ENCODE measurements at regions of chr10 and their contacts with region 1.

Region 1: DNA sequence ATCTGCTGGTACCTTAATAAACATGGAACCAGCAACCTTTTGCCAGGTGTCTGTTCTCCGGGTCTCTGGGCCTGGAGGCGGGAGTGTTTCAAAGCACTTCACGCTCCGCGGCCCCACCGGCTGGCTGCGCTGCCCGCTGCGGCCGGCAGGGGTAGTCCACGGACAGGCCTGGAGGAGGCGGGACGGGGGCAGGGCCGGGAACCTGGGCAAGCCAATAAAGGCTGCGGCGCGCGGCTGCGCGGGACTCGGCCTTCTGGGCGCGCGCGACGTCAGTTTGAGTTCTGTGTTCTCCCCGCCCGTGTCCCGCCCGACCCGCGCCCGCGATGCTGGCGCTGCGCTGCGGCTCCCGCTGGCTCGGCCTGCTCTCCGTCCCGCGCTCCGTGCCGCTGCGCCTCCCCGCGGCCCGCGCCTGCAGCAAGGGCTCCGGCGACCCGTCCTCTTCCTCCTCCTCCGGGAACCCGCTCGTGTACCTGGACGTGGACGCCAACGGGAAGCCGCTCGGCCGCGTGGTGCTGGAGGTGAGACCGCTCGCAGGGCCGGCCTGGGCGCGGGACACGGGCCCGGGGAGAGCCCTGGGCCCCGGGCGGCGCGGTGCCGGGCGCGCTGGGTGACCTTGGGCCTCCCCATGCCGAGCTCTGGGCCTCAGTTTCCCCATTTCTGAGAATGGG is at the start of gene PPIF:
- DNase-seq: peak; percentile 81 to 96 (median 90)
- ATAC-seq: peak; percentile 93
- H3K4me3 ChIP-seq: peak within 1 kb of the TSS; percentile 74
- H3K4me3 Mint-ChIP-seq: peak within 1 kb of the TSS; percentile 85
- H3K27ac ChIP-seq: peak within 1 kb of the TSS; percentile 69 to 73
- H3K27ac Mint-ChIP-seq: peak within 1 kb of the TSS; percentile 81
- H3K4me1 ChIP-seq: peaks cover 58% of the 10 kb centered on the region
- H3K4me1 Mint-ChIP-seq: peaks cover 27% of the 10 kb centered on the region
- H3K27me3 ChIP-seq: no peaks in the 10 kb centered on the region
- H3K27me3 Mint-ChIP-seq: no peaks in the 10 kb centered on the region
- CTCF ChIP-seq: peak; percentile 92
- total RNA-seq, gene PPIF: 42.4 to 42.7 TPM

Region 2: DNA sequence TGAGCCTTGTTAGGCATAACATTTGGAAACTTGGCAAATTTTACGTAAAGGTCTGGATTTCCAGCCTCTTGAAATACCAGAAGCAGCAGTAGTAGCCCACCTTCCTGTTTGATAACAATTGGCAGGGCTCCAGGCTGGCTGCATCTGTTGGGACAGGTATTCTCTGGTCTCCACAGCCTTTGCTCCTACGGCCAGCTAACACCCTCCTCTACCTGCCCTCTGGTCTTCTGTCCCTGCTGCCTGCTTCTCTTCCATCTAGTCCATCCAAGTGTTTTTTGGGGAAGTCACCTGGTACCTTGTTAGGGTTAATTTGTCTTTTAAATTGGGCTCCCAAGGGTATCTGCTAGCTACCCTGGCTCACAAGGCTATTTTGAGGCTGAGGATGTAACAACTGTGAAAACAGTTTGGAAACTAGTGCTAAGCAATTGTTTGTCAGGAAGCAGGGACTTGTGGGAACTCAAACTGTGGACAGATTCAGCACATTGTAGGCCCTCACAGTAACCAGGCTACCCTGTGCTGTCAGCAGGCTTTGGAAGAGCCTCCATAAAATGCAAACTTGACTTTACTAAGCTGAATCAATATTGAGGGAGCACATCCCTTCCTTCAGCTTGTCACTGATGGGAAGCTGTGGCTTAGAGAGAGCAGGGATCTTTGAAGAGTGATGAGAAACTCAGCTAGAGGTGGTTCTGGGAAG is 1305.2 kb before region 1 on chr10:
- CTCF ChIA-PET with region 1: no interaction called
- POLR2A ChIA-PET with region 1: no interaction called
- intact Hi-C with region 1: loop called in 1 of 2 experiments (anchors 5 kb)
- DNase-seq: no peak
- ATAC-seq: no peak
- H3K4me3 ChIP-seq: no peak overlapping the region
- H3K4me3 Mint-ChIP-seq: no peak overlapping the region
- H3K27ac ChIP-seq: no peak overlapping the region
- H3K27ac Mint-ChIP-seq: peak overlapping the region; percentile 76
- H3K4me1 ChIP-seq: peaks cover 34% of the 10 kb centered on the region
- H3K4me1 Mint-ChIP-seq: peaks cover 52% of the 10 kb centered on the region
- H3K27me3 ChIP-seq: no peaks in the 10 kb centered on the region
- H3K27me3 Mint-ChIP-seq: no peaks in the 10 kb centered on the region
- CTCF ChIP-seq: no peak

Region 3: DNA sequence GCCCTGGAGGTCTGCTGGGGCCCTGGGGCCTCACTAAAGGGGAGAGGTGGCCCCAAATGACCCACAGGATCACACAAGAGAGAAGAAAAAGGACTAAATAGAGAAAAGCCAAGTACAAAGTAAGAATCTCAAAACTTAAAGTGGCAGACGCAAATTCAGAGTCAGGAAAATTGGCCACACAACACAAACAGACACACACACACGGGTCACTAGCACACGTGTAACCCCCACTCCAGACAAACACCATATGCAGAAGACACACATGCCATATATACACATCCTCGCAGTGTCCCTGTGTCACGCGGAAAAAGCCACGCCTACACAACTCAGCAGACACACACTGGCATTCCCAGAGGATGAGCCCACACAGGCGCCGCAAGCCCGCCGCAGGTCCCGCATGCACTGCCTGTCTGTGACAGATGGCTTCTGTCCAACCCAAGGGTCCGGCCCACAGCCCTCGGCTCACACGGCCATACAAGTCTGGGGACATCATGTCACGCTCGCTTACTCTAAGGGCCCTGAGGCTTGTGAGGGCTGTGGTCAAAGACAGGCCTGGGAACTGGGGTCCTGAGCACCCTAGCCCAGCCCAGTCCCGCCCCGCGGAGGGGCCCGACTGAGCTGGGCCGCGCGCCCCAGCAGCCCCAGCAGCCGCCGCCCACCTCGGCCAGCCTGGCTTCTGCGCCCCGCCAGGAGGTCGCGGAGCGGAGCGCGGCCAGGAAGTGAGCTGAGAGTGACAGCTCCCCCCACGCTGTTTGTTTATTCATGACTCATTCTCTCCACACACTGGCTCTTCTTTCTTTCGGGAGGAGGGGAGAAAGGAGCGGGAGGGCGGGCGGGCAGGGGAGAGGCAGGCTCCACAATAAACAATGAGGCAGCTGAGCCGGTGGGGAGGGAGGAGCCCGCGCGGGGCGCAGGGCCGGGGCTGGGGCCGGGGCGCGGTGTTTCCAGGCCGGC is 374.1 kb before region 1 on chr10:
- CTCF ChIA-PET with region 1: no interaction called
- POLR2A ChIA-PET with region 1: no interaction called
- intact Hi-C with region 1: loop called in 1 of 2 experiments (anchors 10 kb)
- DNase-seq: peak; percentile 14 to 86 (median 52)
- ATAC-seq: peak; percentile 69
- H3K4me3 ChIP-seq: peak overlapping the region; percentile 56
- H3K4me3 Mint-ChIP-seq: peak overlapping the region; percentile 91
- H3K27ac ChIP-seq: no peak overlapping the region
- H3K27ac Mint-ChIP-seq: peak overlapping the region; percentile 69
- H3K4me1 ChIP-seq: peaks cover 19% of the 10 kb centered on the region
- H3K4me1 Mint-ChIP-seq: peaks cover 15% of the 10 kb centered on the region
- H3K27me3 ChIP-seq: no peaks in the 10 kb centered on the region
- H3K27me3 Mint-ChIP-seq: no peaks in the 10 kb centered on the region
- CTCF ChIP-seq: no peak

Region 4: GRCh38 chr10:79292891-79293746 is 54.2 kb before region 1 on chr10:
- CTCF ChIA-PET with region 1: interaction called, 5 read pairs
- POLR2A ChIA-PET with region 1: no interaction called
- intact Hi-C with region 1: loop called in 1 of 2 experiments (anchors 5 kb)
- DNase-seq: peak in 8 of 14 experiments; percentile 15 to 62 (median 38)
- ATAC-seq: peak; percentile 61
- H3K4me3 ChIP-seq: no peak overlapping the region
- H3K4me3 Mint-ChIP-seq: no peak overlapping the region
- H3K27ac ChIP-seq: no peak overlapping the region
- H3K27ac Mint-ChIP-seq: no peak overlapping the region
- H3K4me1 ChIP-seq: peaks cover 13% of the 10 kb centered on the region
- H3K4me1 Mint-ChIP-seq: peaks cover 8% of the 10 kb centered on the region
- H3K27me3 ChIP-seq: no peaks in the 10 kb centered on the region
- H3K27me3 Mint-ChIP-seq: no peaks in the 10 kb centered on the region
- CTCF ChIP-seq: peak; percentile 57

Region 5: DNA sequence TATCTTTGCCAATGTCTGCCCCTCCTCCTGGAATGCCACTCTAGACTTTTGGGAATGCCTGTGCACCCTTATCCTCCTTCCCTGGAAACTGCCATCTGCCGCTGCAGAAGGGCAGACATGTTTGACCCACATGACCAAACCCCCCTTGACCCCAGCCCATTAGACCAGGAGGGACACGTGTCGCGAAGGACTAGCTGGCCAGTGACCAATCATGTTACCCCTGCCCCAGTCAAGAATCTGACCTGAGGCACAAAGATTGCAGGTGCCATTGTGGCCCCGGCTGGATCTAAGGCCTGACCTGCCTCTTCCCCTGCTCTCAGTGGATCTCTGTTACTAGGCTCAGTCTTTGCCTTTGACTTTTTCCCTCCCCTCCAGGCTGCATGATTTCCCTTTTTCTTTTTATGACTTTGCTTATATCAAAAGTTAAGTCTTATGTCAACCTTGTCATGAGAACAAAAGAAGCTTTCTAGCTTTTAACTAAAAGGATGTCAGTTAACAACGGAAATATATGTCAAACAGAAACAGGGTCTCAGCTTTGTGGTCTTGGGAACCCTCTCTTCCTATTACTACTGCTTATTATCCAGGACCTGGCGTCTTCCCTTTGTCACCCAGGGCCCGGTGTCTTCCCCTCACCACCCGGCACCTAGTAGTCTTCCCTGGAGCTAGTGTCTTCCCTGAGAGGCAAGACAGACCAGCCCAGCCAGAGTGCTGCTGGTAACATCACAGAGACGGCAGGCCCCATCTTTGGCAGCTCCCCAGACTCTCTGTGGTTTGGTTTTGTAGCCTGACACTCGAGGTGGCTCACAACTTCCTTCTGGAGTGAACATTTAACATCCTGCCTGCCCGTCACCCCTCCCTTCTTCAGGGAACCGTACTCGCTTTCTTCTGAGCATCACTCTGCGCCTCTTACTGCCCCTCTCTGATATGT is 24.5 kb before region 1 on chr10:
- CTCF ChIA-PET with region 1: interaction called, 5 read pairs
- POLR2A ChIA-PET with region 1: interaction called, 46 read pairs
- intact Hi-C with region 1: loop called in 1 of 2 experiments (anchors 2 kb)
- DNase-seq: peak; percentile 64 to 92 (median 81)
- ATAC-seq: peak; percentile 93
- H3K4me3 ChIP-seq: peak overlapping the region; percentile 17
- H3K4me3 Mint-ChIP-seq: peak overlapping the region; percentile 82
- H3K27ac ChIP-seq: peak overlapping the region; percentile 42 to 67
- H3K27ac Mint-ChIP-seq: peak overlapping the region; percentile 93
- H3K4me1 ChIP-seq: peaks cover 79% of the 10 kb centered on the region
- H3K4me1 Mint-ChIP-seq: peaks cover 73% of the 10 kb centered on the region
- H3K27me3 ChIP-seq: no peaks in the 10 kb centered on the region
- H3K27me3 Mint-ChIP-seq: peaks cover under 1% of the 10 kb centered on the region
- CTCF ChIP-seq: no peak

Region 6: GRCh38 chr10:79445141-79445976 is 98.0 kb after region 1 on chr10 and contains the start of gene ZCCHC24:
- CTCF ChIA-PET with region 1: interaction called, 4 read pairs
- POLR2A ChIA-PET with region 1: no interaction called
- intact Hi-C with region 1: loop called in 1 of 2 experiments (anchors 2 kb)
- DNase-seq: peak; percentile 87 to 98 (median 93)
- ATAC-seq: peak; percentile 91
- H3K4me3 ChIP-seq: peak within 1 kb of the TSS; percentile 58
- H3K4me3 Mint-ChIP-seq: peak within 1 kb of the TSS; percentile 94
- H3K27ac ChIP-seq: no peak within 1 kb of the TSS
- H3K27ac Mint-ChIP-seq: peak within 1 kb of the TSS; percentile 83
- H3K4me1 ChIP-seq: peaks cover 33% of the 10 kb centered on the region
- H3K4me1 Mint-ChIP-seq: peaks cover 32% of the 10 kb centered on the region
- H3K27me3 ChIP-seq: no peaks in the 10 kb centered on the region
- H3K27me3 Mint-ChIP-seq: no peaks in the 10 kb centered on the region
- CTCF ChIP-seq: no peak
- total RNA-seq, gene ZCCHC24: 0.67 to 0.85 TPM